Breast epithelium (tissue), 4 donors: ENCODE measurements at regions of chr22 and their contacts with region 1.

Region 1: DNA sequence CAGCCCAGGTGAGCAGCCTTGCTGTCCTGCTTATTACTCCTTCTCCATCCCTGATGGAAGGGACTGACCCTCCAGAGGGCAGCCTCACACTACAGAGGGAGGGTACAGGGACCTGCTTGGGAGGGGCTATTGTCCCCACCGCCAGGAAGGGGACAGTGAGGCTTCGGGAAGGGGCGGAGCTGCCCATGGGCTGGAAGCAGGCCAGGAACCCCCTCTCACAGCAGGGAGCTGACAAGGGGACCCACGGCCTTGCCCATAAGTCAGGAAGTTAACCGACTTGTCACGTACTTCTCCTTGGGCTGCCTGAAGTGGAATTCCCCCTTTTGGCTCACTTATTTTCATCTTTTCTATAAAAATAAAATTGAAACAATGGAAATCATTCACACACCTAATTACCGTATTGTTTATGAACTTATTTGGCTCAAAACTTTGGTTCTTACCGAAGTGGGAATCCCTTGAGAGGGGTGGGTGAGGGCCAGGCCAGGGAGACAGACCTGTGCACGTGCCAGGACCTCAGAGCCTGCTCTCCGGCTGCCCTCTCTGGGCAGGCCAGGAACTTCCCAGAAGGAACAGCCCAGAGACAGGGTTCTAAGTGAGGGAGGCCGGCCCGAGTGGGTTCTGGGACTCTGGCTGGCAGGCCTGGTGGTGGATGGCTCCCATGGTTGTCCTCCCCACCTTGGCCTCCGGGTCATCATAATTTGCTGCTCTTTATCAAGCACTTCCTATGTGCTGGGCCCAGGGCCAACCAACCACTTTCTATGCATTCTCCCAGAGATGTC is 5.8 kb downstream of the MGAT3 start:
- DNase-seq: no peak
- H3K4me3 ChIP-seq: no peak overlapping the region
- H3K27ac ChIP-seq: peak overlapping the region; percentile 67 to 84
- H3K4me1 ChIP-seq: peaks cover 0 to 3% of the 10 kb centered on the region in 2 donors
- H3K27me3 ChIP-seq: peaks cover 4 to 5% of the 10 kb centered on the region in 2 donors
- CTCF ChIP-seq: no peak
- POLR2A ChIP-seq: no peak

Region 2: GRCh38 chr22:41009202-41009943 is 1546.7 kb after region 1 on chr22:
- intact Hi-C with region 1: loop called (anchors 5 kb)
- DNase-seq: no peak
- H3K4me3 ChIP-seq: no peak overlapping the region
- H3K27ac ChIP-seq: no peak overlapping the region
- H3K4me1 ChIP-seq: no peaks in the 10 kb centered on the region
- H3K27me3 ChIP-seq: no peaks in the 10 kb centered on the region
- CTCF ChIP-seq: no peak
- POLR2A ChIP-seq: no peak